Common myeloid progenitor, CD34-positive (primary cell): ENCODE measurements at regions of chr6 and their contacts with region 1.

Region 1: DNA sequence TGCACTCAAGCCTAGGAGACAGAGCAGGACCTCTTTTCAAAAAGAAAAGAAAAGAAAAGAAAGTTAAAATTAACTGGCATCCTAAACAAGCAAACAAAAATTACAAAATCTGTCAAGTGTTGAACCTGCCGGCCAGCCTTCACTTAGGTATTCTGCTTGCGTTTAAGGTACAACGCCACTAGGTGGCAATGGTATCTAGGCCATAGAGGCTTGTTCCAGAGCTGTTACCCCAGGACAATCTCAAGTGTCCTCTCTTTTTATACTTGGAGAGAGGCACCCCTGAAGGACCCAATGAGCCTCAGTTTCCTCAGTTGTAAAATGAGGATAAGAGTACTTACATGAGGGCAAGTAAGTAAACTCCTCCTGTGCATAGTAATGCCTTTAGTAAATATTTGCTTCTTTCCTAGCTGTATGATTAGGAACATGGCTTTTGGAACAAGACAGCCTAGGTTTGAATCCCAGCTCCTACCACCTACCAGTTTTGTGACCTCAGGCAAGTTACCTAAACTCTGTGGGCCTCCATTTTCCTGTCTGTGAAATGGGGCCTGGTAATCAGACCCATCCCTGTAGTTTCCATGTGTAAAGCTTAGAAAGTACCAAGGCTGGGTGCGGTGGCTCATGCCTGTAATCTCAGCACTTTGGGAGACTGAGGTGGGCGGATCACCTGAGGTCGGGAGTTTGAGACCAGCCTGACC is 5.8 kb upstream of the PACSIN1 start:
- DNase-seq: peak; percentile 61 to 85 (median 78)
- H3K4me3 ChIP-seq: no peak overlapping the region
- H3K27ac ChIP-seq: no peak overlapping the region
- H3K4me1 ChIP-seq: peaks cover 0 to 1% (median under 1%) of the 10 kb centered on the region in 4 experiments
- H3K27me3 ChIP-seq: peaks cover 0 to 16% (median 4%) of the 10 kb centered on the region in 5 experiments

Region 2: DNA sequence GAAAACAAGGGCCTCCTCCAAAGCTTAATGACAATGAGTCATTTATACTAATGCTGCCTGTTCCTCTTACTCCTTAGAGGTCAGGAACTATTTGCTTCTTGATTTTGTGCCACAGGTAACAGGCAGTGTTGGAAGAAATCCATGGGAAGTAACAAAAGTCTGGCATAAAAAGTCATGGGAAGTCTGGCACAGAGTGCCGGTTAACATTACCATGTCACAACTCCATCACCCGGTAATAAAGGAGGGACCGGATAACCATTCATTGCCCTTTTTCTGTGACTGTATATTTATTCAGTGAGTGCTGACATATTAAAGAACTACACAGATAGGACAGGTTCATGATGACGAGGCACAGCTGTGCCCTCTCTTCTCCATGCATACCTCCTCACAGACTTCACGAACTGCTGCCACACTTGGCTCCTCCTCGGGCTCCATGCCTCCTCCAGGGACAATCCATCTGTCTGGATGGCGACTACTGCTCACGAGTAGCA is 118.5 kb before region 1 on chr6:
- CTCF ChIA-PET with region 1: no interaction called
- POLR2A ChIA-PET with region 1: no interaction called
- DNase-seq: peak in 1 of 3 donors; percentile 26
- H3K4me3 ChIP-seq: no peak overlapping the region
- H3K27ac ChIP-seq: no peak overlapping the region
- H3K4me1 ChIP-seq: peaks cover 0 to 47% (median 35%) of the 10 kb centered on the region in 4 experiments
- H3K27me3 ChIP-seq: no peaks in the 10 kb centered on the region

Region 3: DNA sequence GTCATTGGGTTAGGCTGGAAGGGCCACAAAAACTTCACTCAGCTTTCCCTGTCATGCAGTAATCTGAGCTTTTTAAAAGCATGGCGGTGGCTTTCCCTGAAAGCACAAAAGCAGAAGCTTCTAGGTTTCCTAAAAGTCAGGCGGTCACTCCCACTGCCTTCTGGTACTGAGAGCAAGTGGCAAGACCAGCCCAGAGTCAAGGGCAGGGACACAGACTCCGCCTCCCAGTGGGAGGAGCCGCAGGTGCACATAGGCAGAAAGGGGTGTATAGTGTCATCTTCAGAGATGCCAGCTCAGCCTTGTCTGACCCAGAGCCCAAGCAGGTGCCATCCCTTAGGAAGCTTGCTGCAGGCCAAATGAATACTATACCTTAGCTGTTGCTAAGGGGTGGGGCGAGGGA is 12.1 kb before region 1 on chr6:
- CTCF ChIA-PET with region 1: interaction called, 31 read pairs
- POLR2A ChIA-PET with region 1: interaction called, 3 read pairs
- DNase-seq: no peak
- H3K4me3 ChIP-seq: no peak overlapping the region
- H3K27ac ChIP-seq: no peak overlapping the region
- H3K4me1 ChIP-seq: peaks cover 0 to 3% (median 0%) of the 10 kb centered on the region in 4 experiments
- H3K27me3 ChIP-seq: no peaks in the 10 kb centered on the region

Region 4: DNA sequence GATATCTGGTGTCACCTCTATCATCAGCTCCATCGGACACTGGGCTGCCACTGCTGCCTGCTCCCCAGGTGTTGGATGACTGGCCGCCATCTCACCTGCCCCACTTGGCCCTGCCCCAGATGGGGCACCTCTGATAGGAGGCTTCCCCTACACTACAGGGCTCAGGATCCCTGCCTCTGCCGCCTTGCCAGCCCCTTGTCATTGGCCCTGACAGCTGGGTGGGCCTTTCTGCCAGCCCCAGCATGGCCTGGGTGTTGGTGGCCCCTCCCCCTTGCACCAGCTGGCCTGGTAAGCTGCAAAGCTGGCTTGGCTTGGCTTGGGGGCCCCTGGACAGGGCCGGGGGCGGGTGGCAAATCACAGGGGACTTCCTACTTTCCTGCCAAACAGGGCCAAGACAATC is 16.4 kb after region 1 on chr6:
- CTCF ChIA-PET with region 1: interaction called, 21 read pairs
- POLR2A ChIA-PET with region 1: no interaction called
- DNase-seq: no peak
- H3K4me3 ChIP-seq: no peak overlapping the region
- H3K27ac ChIP-seq: no peak overlapping the region
- H3K4me1 ChIP-seq: peaks cover 0 to 2% (median 0%) of the 10 kb centered on the region in 4 experiments
- H3K27me3 ChIP-seq: no peaks in the 10 kb centered on the region

Region 5: GRCh38 chr6:34671801-34672656 is 212.0 kb after region 1 on chr6:
- CTCF ChIA-PET with region 1: no interaction called
- POLR2A ChIA-PET with region 1: no interaction called
- DNase-seq: peak; percentile 70 to 92 (median 88)
- H3K4me3 ChIP-seq: peak overlapping the region in 3 of 7 experiments; percentile 2 to 56 (median 30)
- H3K27ac ChIP-seq: peak overlapping the region; percentile 49 to 81
- H3K4me1 ChIP-seq: peaks cover 26 to 54% (median 43%) of the 10 kb centered on the region in 4 experiments
- H3K27me3 ChIP-seq: no peaks in the 10 kb centered on the region